Activated CD8-positive, alpha-beta T cell treated with anti-CD3 and anti-CD28 coated beads, Interleukin-2, amount 10 ng/mL, durations not matched to agents 7 days and 5 days (primary cell): ENCODE measurements at regions of chr3 and their contacts with region 1.

Region 1: DNA sequence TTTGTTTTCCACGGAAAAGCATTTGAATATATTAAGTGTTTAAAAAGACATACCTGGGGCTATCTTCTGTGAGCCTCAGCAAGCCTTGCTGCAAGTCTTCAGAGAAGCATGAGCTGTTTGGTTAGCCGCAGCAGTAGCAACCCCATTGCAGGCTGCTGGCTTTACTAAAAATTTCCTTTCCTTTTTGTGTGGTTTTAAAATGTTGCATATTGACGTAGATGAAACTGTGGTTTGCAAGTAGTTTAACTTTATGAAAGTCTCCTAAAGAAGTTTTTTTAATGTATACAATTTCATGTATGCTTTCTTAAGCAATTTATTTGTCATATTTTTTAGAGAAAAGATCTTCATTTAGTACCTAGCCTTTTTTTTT is at the start of gene GPR171:
- DNase-seq: peak; percentile 85
- ATAC-seq: peak; percentile 73
- H3K4me3 Mint-ChIP-seq: peak within 1 kb of the TSS; percentile 87
- H3K27ac Mint-ChIP-seq: peak within 1 kb of the TSS; percentile 94
- H3K4me1 Mint-ChIP-seq: peaks cover 59% of the 10 kb centered on the region
- H3K27me3 Mint-ChIP-seq: no peaks in the 10 kb centered on the region
- total RNA-seq, gene GPR171: 115 to 124 TPM

Region 2: GRCh38 chr3:151183265-151183671 is 19.8 kb before region 1 on chr3:
- CTCF ChIA-PET with region 1: interaction called, 11 read pairs
- POLR2A ChIA-PET with region 1: interaction called, 51 read pairs
- DNase-seq: peak; percentile 38
- ATAC-seq: peak; percentile 79
- H3K4me3 Mint-ChIP-seq: peak overlapping the region; percentile 58
- H3K27ac Mint-ChIP-seq: peak overlapping the region; percentile 81
- H3K4me1 Mint-ChIP-seq: peaks cover 47% of the 10 kb centered on the region
- H3K27me3 Mint-ChIP-seq: no peaks in the 10 kb centered on the region

Region 3: GRCh38 chr3:151191095-151191494 is 11.9 kb before region 1 on chr3:
- CTCF ChIA-PET with region 1: interaction called, 8 read pairs
- POLR2A ChIA-PET with region 1: interaction called, 51 read pairs
- DNase-seq: no peak
- ATAC-seq: no peak
- H3K4me3 Mint-ChIP-seq: no peak overlapping the region
- H3K27ac Mint-ChIP-seq: no peak overlapping the region
- H3K4me1 Mint-ChIP-seq: peaks cover 31% of the 10 kb centered on the region
- H3K27me3 Mint-ChIP-seq: no peaks in the 10 kb centered on the region